ENCODE measurements at regions of chr21 and their contacts with region 1.

Region 1: DNA sequence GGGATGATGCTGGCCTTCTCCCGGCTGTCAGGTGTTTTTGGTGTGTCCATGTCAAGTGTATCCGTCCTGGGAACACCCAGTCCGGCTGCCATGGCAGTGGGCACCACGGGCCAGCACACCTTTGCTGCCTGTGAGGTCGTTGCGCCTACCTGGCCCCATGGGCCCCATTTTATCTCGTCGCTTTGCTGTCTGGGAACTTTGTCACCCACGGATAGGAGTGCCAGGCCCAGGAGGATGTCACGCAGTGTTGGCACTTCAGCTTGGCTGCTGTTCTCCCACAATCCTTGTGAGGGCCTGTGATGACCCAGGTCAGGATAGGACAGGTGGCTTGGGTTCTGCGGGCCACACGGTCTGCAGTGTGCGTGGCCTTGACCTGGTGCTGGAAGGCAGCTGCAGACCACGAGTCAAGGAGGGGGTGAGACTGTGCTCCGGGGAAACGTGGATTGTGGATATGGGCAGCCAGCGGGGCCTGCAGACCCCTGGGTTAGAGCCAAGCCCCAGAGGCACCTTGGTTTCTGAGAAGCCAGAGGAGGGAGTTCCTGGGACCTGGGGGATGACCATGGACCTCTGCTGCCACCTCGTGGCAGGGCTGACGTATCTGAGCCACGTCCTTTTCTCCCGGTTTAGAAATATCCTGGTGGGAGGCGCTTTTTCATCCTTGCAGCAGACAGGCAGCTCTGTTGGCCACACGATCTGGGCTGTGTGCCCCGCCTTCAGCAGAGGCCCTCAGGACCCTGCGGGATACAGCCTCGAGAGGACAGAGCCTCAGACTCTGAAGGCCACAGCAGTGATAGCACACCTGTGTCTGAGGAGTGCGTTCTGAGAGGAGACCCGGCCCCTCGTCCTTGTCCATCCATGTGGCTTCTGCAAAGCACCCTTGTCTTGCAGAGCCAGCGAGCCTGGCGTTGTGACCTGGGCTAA is 161.1 kb upstream of the COL6A1 start:
- DNase-seq: peak; percentile 86
- H3K4me3 Mint-ChIP-seq: no peak overlapping the region
- H3K27ac Mint-ChIP-seq: peak overlapping the region; percentile 56
- H3K4me1 Mint-ChIP-seq: peaks cover 47% of the 10 kb centered on the region
- H3K27me3 Mint-ChIP-seq: peaks cover 4% of the 10 kb centered on the region

Region 2: DNA sequence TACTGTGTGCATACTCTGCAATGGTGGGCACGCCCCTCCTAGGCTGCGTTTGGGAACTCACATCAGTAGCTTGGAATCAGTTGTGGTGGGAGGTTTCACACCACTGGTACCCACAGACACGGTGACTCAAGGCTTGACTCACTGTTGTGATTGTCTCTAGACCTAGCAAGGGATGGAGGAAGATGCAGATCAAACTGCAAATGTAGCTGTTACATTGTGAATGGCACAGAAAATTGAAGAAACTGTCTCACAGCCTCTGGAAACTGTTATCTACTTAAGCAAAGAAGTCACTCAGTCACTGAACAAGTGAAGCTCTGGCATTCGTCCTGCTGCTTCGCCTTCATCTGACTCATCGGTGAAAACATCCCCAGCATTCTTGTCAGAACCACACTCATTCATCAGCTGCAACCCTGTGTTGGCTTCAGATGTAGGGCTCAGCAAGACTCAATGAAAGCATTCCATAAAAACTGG is 592.2 kb before region 1 on chr21:
- CTCF ChIA-PET with region 1: no interaction called
- POLR2A ChIA-PET with region 1: interaction called, 4 read pairs
- intact Hi-C with region 1: loop called (anchors 5 kb)
- DNase-seq: peak; percentile 90
- H3K4me3 Mint-ChIP-seq: peak overlapping the region; percentile 23
- H3K27ac Mint-ChIP-seq: peak overlapping the region; percentile 66
- H3K4me1 Mint-ChIP-seq: peaks cover 48% of the 10 kb centered on the region
- H3K27me3 Mint-ChIP-seq: peaks cover 7% of the 10 kb centered on the region

Region 3: DNA sequence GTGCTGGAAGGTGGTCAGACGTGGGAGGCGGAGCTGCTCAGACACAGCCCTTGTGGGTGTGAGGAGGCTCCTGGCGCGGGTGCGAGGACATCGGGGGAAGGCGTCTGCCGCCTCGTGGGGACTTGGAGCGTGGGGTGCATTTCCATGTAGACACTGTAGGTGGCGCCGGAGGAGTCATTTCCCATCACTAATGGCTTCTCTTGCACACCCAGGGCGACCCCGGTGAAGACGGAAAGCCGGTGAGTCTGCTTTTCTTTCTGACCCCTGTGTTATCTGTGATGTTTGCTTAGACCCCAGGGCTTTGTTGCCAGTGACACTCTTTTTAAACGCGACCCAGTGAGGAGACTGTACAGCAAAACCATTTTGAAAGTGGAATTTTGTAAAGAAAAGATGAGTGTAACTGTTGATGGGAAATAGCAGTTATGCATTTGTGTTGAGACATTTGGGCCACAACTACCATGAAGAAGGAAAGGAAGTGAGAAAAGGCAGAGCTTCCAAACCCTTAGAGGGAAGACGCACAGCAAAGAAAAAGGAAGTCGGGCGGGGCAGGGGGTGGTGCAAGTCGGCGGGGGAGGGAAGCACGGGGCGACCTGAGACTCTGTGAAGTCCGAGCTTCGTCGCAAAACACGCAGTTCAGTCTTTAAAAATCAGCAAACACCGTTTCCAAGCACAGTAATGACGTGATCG is 342.2 kb before region 1 on chr21:
- CTCF ChIA-PET with region 1: interaction called, 3 read pairs
- POLR2A ChIA-PET with region 1: no interaction called
- intact Hi-C with region 1: loop called (anchors 2 kb)
- DNase-seq: peak; percentile 86
- H3K4me3 Mint-ChIP-seq: peak overlapping the region; percentile 78
- H3K27ac Mint-ChIP-seq: peak overlapping the region; percentile 90
- H3K4me1 Mint-ChIP-seq: peaks cover 24% of the 10 kb centered on the region
- H3K27me3 Mint-ChIP-seq: no peaks in the 10 kb centered on the region

Region 4: DNA sequence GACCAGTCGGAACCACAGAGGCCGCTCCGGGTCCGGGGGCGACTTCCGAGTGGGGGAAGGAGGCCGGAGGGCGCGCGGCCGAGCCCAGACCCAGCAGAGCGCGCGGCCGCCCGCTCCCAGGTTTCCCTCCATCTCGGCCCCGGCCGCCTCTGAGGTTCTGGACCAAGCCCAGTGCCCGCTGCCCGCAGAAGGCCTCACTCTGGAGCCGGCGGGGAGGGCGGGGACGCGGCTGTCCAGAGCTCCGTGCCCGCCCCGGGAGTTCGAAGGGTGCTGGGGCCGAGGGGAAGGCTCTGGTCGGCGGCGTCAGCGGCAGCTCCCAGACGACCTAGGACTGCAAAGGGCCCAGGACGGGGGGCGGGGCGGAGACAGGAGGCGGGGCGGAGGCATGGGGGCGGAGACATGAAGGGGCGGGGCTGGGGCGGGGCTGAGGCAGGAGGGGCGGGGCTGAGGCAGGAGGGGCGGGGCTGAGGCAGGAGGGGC is 230.1 kb before region 1 on chr21:
- CTCF ChIA-PET with region 1: interaction called, 5 read pairs
- POLR2A ChIA-PET with region 1: interaction called, 4 read pairs
- intact Hi-C with region 1: loop called (anchors 1 kb)
- DNase-seq: peak; percentile 84
- H3K4me3 Mint-ChIP-seq: peak overlapping the region; percentile 52
- H3K27ac Mint-ChIP-seq: no peak overlapping the region
- H3K4me1 Mint-ChIP-seq: peaks cover 16% of the 10 kb centered on the region
- H3K27me3 Mint-ChIP-seq: peaks cover 17% of the 10 kb centered on the region

Region 5: GRCh38 chr21:45643021-45643980 is 177.1 kb before region 1 on chr21 and contains the start of gene PCBP3:
- CTCF ChIA-PET with region 1: no interaction called
- POLR2A ChIA-PET with region 1: no interaction called
- intact Hi-C with region 1: loop called (anchors 1 kb)
- DNase-seq: peak; percentile 98
- H3K4me3 Mint-ChIP-seq: peak within 1 kb of the TSS; percentile 71
- H3K27ac Mint-ChIP-seq: peak within 1 kb of the TSS; percentile 49
- H3K4me1 Mint-ChIP-seq: peaks cover 25% of the 10 kb centered on the region
- H3K27me3 Mint-ChIP-seq: peaks cover 18% of the 10 kb centered on the region
- total RNA-seq, gene PCBP3: 5.3 to 6.6 TPM

Region 6: GRCh38 chr21:45768751-45769070 is 51.7 kb before region 1 on chr21:
- CTCF ChIA-PET with region 1: no interaction called
- POLR2A ChIA-PET with region 1: interaction called, 4 read pairs
- intact Hi-C with region 1: loop called (anchors 1 kb)
- DNase-seq: peak; percentile 48
- H3K4me3 Mint-ChIP-seq: peak overlapping the region; percentile 31
- H3K27ac Mint-ChIP-seq: peak overlapping the region; percentile 87
- H3K4me1 Mint-ChIP-seq: peaks cover 41% of the 10 kb centered on the region
- H3K27me3 Mint-ChIP-seq: no peaks in the 10 kb centered on the region

Region 7: DNA sequence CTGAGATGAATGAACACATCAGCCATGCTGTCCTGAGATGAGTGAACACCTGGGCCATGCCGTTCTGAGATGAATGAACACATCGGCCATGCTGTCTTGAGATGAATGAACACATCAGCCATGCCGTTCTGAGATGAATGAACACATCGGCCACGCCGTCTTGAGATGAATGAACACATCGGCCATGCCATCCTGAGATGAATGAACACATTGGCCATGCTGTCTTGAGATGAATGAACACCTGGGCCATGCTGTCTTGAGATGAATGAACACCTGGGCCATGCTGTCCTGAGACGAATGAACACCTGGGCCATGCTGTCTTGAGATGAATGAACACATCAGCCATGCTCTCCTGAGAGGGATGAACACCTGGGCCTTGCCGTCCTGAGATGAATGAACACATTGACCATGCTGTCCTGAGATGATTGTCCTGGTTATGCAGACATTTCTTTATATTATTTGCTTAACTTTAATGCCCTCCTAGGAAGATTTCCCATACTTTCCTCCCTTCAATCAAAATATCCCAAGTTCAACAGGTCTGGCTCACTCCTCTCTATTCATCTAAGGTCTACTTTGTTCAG is 112.6 kb after region 1 on chr21:
- CTCF ChIA-PET with region 1: no interaction called
- POLR2A ChIA-PET with region 1: no interaction called
- intact Hi-C with region 1: loop called (anchors 2 kb)
- DNase-seq: peak; percentile 71
- H3K4me3 Mint-ChIP-seq: no peak overlapping the region
- H3K27ac Mint-ChIP-seq: peak overlapping the region; percentile 56
- H3K4me1 Mint-ChIP-seq: peaks cover 27% of the 10 kb centered on the region
- H3K27me3 Mint-ChIP-seq: peaks cover 19% of the 10 kb centered on the region

Measured in activated CD4-positive, alpha-beta memory T cell treated with anti-CD3 and anti-CD28 coated beads for 36 hours (primary cell).